Activated T-helper 1 cell treated with anti-CD3 and anti-CD28 coated beads, Interleukin-12 subunit alpha, Interleukin-12 subunit beta, Interleukin-2, Interleukin-4 antibody, amounts not matched to agents 30 ng/mL and 10 ng/mL and 1 ng/mL, durations not matched to agents 14 hours and 24 hours and 36 hours (primary cell): ENCODE measurements at regions of chr17 and their contacts with region 1.

Region 1: GRCh38 chr17:59440784-59441441 is 109.5 kb downstream of the YPEL2 start:
- DNase-seq: peak; percentile 81
- H3K4me3 Mint-ChIP-seq: peak overlapping the region; percentile 74
- H3K27ac Mint-ChIP-seq: peak overlapping the region; percentile 96
- H3K4me1 Mint-ChIP-seq: peaks cover 61% of the 10 kb centered on the region
- H3K27me3 Mint-ChIP-seq: peaks cover 5% of the 10 kb centered on the region

Region 2: DNA sequence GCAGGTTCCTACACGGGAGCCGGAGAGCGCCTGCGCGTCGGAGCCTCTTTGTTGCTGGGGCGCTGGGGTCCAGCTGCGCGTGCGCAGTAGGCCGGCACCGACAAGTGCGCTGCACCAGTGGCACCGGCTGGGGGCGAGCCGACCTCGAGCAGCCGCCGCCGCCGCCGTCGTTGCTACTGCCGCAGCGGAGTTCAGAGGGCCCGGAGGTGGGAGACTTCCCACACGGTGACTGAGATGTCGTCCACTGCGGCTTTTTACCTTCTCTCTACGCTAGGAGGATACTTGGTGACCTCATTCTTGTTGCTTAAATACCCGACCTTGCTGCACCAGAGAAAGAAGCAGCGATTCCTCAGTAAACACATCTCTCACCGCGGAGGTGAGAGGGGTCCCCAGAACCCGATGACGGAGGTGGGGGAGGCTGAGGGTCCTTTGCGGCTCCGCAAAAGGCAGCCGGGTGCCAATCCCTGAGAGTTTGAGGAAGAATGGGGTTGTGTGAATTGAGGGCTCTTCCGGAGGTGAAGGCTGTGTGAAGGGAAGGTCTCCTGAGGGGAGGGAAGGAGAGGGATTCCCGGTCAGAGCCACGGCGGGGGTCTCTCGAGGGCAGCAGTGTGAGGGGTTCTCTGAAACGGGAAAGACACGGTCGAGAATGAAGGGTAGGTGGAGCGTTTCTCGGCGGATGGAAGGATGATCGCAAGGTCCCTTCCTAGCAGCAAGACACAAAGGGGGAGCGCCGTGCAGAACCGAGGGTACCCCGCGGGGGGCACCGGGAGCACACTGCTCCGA is 220.3 kb before region 1 on chr17 and contains the start of gene GDPD1:
- intact Hi-C with region 1: loop called (anchors 1 kb)
- DNase-seq: peak; percentile 97
- H3K4me3 Mint-ChIP-seq: peak within 1 kb of the TSS; percentile 95
- H3K27ac Mint-ChIP-seq: peak within 1 kb of the TSS; percentile 93
- H3K4me1 Mint-ChIP-seq: peaks cover 14% of the 10 kb centered on the region
- H3K27me3 Mint-ChIP-seq: peaks cover 6% of the 10 kb centered on the region
- total RNA-seq, gene GDPD1: 2.7 and 3.2 TPM in 2 replicates

Region 3: GRCh38 chr17:59331129-59331928 is 109.6 kb before region 1 on chr17 and contains the start of gene YPEL2:
- intact Hi-C with region 1: loop called (anchors 1 kb)
- DNase-seq: peak; percentile 88
- H3K4me3 Mint-ChIP-seq: peak within 1 kb of the TSS; percentile 89
- H3K27ac Mint-ChIP-seq: peak within 1 kb of the TSS; percentile 77
- H3K4me1 Mint-ChIP-seq: peaks cover 52% of the 10 kb centered on the region
- H3K27me3 Mint-ChIP-seq: peaks cover 27% of the 10 kb centered on the region
- total RNA-seq, gene YPEL2: 7.4 and 7.9 TPM in 2 replicates

Region 4: GRCh38 chr17:59427425-59427921 is 13.4 kb before region 1 on chr17:
- intact Hi-C with region 1: loop called (anchors 2 kb)
- DNase-seq: no peak
- H3K4me3 Mint-ChIP-seq: no peak overlapping the region
- H3K27ac Mint-ChIP-seq: no peak overlapping the region
- H3K4me1 Mint-ChIP-seq: peaks cover 25% of the 10 kb centered on the region
- H3K27me3 Mint-ChIP-seq: no peaks in the 10 kb centered on the region

Region 5: DNA sequence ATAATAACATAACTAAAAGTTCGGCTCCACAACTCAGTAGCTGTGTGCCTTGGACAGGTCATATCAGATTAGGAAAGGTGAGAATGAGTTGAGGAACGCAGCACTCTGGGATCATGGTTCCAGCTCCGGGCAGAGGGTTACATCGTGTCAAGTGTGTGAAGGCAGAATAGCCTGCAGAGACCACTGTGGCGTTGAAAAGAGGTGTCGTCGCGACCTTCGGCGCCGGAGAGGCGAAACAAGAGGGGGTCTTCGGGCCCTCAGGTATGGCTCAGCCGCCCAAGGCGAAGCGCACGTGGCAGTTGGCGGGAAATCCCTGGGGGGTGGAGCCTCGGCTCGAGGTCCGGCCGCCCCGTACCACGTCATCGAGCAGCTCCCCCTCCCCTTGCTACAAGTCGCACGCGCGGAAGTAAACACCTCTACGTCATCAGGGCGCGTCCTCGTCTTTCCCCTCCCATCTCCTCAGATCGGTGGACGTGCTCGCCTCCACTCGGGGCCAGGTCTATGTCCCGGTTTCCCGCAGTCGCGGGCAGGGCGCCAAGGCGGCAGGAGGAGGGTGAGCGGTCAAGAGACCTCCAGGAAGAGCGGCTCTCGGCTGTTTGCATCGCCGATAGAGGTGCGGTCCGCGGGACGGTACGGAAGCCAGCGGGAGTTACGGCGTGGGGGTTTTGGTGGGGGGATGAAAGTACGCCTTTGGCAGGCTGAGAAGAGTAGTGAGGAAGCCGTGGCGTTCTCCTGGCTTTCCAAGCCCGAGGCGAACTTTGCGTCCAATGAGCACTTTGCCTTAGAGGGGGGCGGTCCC is 124.5 kb after region 1 on chr17 and contains the start of gene DHX40:
- intact Hi-C with region 1: loop called (anchors 2 kb)
- DNase-seq: peak; percentile 90
- H3K4me3 Mint-ChIP-seq: peak within 1 kb of the TSS; percentile 100
- H3K27ac Mint-ChIP-seq: peak within 1 kb of the TSS; percentile 100
- H3K4me1 Mint-ChIP-seq: peaks cover 24% of the 10 kb centered on the region
- H3K27me3 Mint-ChIP-seq: peaks cover 7% of the 10 kb centered on the region
- total RNA-seq, gene DHX40: 16.8 and 17.1 TPM in 2 replicates

Region 6: DNA sequence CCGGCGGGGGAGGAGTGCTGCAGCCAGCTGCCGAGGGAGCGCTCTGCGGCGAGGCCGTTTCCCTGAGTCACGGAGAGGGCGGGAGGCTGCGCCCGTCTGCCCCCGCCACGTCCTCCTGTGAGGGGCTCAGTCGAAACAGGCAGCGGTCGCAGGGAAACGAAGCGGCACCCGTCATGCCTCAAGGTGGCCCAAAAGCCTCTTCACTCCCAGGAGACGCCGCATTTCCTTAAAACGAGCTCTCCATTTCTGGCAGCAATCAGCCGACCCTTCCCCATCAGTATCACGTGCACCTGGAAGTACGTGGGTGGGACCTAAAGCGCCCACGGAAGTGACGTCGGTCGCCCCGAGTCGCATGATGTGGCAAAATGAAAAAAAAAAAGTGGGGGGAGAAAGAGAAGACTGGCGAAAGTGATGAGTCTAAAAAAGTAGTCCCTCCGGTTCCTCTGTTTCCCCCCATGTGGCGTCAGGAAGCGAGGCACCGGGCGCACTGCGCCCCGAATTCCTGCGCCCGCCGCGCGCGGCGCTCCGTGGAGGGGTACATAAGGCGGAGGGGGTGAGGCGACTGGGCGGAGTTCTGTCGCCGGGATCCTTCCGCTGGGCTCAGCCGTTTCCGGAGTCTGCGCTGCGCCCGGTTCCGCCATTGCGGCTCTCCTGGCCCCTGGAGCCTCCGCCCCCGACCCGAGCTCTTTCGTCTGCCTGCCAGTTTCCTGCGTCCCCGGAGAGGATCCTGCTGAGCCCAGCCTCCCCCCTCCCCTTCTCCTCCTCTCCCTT is 178.6 kb after region 1 on chr17 and contains the start of gene CLTC:
- intact Hi-C with region 1: loop called (anchors 2 kb)
- DNase-seq: peak; percentile 90
- H3K4me3 Mint-ChIP-seq: peak within 1 kb of the TSS; percentile 97
- H3K27ac Mint-ChIP-seq: peak within 1 kb of the TSS; percentile 100
- H3K4me1 Mint-ChIP-seq: peaks cover 57% of the 10 kb centered on the region
- H3K27me3 Mint-ChIP-seq: no peaks in the 10 kb centered on the region
- total RNA-seq, gene CLTC: 176 and 186 TPM in 2 replicates